ENCODE measurements at regions of chr12 and their contacts with region 1.

Region 1: DNA sequence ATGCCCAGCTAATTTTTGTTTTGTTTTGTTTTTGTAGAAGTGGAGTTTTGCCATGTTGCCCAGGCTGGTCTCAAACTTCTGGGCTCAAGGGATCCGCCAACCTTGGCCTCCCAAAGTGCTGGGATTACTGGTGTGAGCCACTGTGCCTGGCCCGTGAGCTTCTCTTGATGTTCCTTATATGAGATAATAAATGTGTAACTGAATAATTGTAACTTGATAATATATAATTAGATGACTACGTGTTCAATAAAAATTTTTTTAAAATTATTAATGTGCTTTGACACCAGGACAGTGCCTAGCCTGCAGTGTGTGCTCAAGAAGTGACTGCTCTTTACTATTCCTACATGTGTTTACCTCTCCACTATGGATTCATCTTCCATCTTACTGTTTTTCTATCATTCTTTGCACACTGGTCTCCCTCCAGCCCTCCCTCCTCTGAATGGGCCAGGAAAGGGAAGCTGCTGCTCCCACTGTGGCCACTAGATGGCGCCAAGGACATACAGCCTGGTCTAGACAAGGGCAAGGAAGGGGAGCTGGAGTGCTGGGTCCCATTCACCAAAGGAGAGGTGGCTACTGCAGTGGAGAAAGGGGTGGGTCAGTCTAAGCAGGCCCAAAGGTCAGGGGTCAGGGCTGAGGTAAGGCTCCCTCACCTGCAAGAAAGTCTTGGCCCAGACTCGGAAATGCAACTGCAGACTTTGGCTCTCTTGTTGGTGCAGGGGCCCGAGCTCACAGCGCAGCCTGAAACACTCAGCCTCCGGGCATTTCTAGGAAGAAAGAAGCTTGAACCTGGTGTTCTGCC is 14.7 kb upstream of the ZNF385A start:
- DNase-seq: peak; percentile 80
- H3K4me3 Mint-ChIP-seq: no peak overlapping the region
- H3K27ac Mint-ChIP-seq: no peak overlapping the region
- H3K4me1 Mint-ChIP-seq: peaks cover 2% of the 10 kb centered on the region
- H3K27me3 Mint-ChIP-seq: no peaks in the 10 kb centered on the region

Region 2: GRCh38 chr12:54368709-54369583 is 30.2 kb before region 1 on chr12:
- intact Hi-C with region 1: no loop called
- DNase-seq: peak; percentile 79
- H3K4me3 Mint-ChIP-seq: peak overlapping the region; percentile 53
- H3K27ac Mint-ChIP-seq: no peak overlapping the region
- H3K4me1 Mint-ChIP-seq: peaks cover 30% of the 10 kb centered on the region
- H3K27me3 Mint-ChIP-seq: no peaks in the 10 kb centered on the region

Region 3: DNA sequence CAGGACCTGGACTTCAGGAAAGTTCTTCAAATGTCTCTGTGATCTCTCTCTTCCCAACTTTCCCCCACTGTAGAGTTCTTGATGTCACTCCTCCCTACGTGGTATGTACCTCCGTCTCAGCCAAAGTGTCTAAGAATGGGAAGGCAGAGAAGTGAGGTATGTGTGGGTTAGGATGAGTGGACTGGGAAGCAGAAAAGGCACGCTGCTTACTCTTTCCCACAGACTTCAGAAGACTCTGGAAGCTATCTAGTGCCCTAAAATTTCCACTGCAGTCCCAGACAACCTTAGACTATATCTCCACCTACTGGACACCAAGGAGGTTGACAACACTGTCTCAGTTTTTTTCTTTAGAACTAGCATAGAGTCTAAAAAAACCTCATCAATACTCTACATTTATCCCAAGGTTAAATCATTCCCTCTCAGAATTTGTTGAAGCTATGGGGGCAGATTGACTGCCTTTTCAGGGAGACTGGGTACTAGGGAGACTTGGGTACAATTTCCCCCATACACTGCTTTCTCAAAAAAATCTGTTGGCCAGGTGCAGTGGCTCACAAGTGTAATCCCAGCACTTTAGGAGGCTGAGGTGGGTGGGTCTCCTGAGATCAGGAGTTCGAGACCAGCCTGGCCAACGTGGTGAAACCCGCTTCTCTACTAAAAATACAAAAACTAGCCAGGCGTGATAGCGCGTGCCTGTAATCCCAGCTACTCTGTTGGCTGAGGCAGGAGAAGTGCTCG is 40.5 kb after region 1 on chr12:
- intact Hi-C with region 1: loop called (anchors 1 kb)
- DNase-seq: no peak
- H3K4me3 Mint-ChIP-seq: no peak overlapping the region
- H3K27ac Mint-ChIP-seq: peak overlapping the region; percentile 29
- H3K4me1 Mint-ChIP-seq: peaks cover 7% of the 10 kb centered on the region
- H3K27me3 Mint-ChIP-seq: peaks cover 15% of the 10 kb centered on the region